ENCODE measurements at regions of chr19 and their contacts with region 1.

Region 1: DNA sequence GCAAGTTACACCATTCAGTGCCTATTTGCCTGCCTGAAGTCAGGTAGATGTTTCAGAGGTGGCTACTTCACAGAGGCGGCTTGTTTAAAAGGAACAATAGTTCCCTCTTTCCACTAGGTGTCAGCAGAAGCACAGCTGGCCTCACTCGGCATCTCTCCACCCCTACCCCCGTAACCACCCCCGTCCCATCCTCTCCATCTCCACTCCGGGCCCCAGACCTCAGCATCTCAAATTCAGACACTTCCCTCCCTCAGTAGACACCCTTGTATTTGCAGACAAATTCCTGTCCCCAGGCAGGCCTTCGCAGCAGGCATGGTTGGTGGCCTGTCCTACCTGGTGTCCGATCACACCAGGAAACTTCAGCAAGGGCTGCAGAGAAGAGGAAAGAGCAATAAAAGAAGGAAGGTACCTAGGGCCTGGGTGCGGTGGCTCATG is 9.1 kb upstream of the DPP9 start:
- DNase-seq: peak in 1 of 2 experiments; percentile 66
- H3K4me3 ChIP-seq: peak overlapping the region in 1 of 4 experiments; percentile 40; a peak in 1 of 8 replicates
- H3K27ac ChIP-seq: no peak overlapping the region
- H3K4me1 ChIP-seq: no peaks in the 10 kb centered on the region
- H3K27me3 ChIP-seq: no peaks in the 10 kb centered on the region
- CTCF ChIP-seq: peak; percentile 65 to 92 (median 75)
- EP300 ChIP-seq: no peak
- POLR2A ChIP-seq: no peak
- RAD21 ChIP-seq: peak; percentile 91 to 94

Region 2: GRCh38 chr19:4742723-4743646 is 10.3 kb after region 1 on chr19:
- CTCF ChIA-PET with region 1: interaction called, 38 read pairs
- POLR2A ChIA-PET with region 1: no interaction called
- DNase-seq: peak in 1 of 2 experiments; percentile 69
- H3K4me3 ChIP-seq: peak overlapping the region in 3 of 4 experiments; percentile 27 to 42 (median 36); a peak in 5 of 8 replicates
- H3K27ac ChIP-seq: no peak overlapping the region
- H3K4me1 ChIP-seq: peaks cover 0 to 14% (median 9%) of the 10 kb centered on the region in 4 experiments; a peak in 5 of 7 replicates
- H3K27me3 ChIP-seq: no peaks in the 10 kb centered on the region; a peak in 1 of 7 replicates
- CTCF ChIP-seq: no peak
- EP300 ChIP-seq: no peak
- POLR2A ChIP-seq: no peak
- RAD21 ChIP-seq: no peak

Region 3: DNA sequence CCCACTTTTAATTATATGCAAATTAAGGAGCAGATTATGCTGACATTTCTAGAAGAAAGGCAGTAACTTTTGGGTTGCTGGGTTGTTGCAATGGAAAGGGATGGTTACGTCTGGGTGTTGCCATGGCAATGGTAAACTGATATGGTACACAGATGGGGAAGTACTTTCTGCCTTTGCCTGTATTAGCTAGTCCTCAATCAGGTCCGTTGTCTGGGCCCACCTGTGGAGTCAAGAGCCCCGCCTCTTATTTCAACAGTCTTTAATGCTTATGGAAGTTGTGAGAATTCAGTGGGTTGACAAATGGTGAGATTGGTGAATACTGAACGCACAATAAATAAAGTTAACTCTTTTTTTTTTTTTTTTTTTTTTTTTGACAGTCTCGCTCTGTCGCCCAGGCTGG is 21.6 kb after region 1 on chr19:
- CTCF ChIA-PET with region 1: interaction called, 38 read pairs
- POLR2A ChIA-PET with region 1: no interaction called
- DNase-seq: no peak
- H3K4me3 ChIP-seq: no peak overlapping the region
- H3K27ac ChIP-seq: no peak overlapping the region
- H3K4me1 ChIP-seq: peaks cover 0 to under 1% (median under 1%) of the 10 kb centered on the region in 4 experiments; a peak in 1 of 7 replicates
- H3K27me3 ChIP-seq: peaks cover 0 to 7% (median 4%) of the 10 kb centered on the region in 4 experiments; a peak in 4 of 7 replicates
- CTCF ChIP-seq: no peak
- EP300 ChIP-seq: no peak
- POLR2A ChIP-seq: no peak
- RAD21 ChIP-seq: no peak

Region 4: DNA sequence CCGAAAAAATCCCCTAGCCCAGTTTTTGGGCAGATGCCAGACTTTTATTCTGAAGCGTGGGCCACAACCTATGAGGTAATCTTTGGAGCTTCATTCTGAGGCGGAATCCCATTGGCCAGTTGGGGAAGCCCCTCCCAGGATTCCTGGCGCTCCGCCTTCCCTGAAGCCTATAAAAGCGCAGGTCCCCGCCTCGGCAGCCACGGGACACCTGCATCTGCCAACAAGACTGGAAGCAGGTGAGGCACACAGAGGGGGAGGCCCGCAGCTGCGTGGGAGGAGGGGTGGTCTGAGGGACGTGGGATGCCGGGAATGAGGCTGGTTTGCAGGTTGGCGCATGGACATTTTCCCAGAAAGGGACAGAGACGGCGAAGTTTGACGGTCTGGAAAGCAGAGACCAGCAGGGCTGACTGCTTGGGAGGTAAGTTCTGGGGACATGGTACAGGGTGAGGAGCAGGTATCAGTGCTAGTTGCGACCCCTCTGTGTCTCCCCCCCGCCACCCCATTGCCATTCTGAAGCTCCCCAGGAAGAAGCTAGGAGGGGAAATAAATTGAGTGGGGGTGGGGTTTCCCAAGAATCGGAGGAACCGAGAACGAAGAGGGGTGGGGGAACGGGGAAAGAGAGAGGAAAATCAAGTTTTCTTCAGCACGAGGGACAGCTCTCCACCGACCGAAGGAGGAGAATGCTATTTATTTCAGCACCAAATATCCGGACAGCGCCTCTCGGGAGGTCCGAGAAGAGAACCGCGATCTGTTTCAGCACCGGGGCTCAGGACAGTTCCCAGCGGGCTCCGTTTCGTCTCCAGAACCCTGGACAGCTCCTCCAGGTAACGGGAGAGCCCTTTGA is 36.5 kb after region 1 on chr19:
- CTCF ChIA-PET with region 1: interaction called, 15 read pairs
- POLR2A ChIA-PET with region 1: interaction called, 4 read pairs
- DNase-seq: peak; percentile 57 to 99
- H3K4me3 ChIP-seq: peak overlapping the region in 2 of 4 experiments; percentile 14 to 17; a peak in 2 of 8 replicates
- H3K27ac ChIP-seq: no peak overlapping the region
- H3K4me1 ChIP-seq: peaks cover 0 to 3% (median 0%) of the 10 kb centered on the region in 4 experiments; a peak in 1 of 7 replicates
- H3K27me3 ChIP-seq: 0 out of 7 replicates have a peak, but pooled peaks cover 0 to 2% (median 0%) of the 10 kb centered on the region in 4 experiments
- CTCF ChIP-seq: no peak
- EP300 ChIP-seq: peak in 1 of 2 experiments; percentile 78; a peak in 2 of 3 replicates
- POLR2A ChIP-seq: peak; percentile 62 to 68
- RAD21 ChIP-seq: 0 out of 4 replicates have a peak, but pooled peaks of 1 of the 2 experiments have one; percentile 6

Region 5: DNA sequence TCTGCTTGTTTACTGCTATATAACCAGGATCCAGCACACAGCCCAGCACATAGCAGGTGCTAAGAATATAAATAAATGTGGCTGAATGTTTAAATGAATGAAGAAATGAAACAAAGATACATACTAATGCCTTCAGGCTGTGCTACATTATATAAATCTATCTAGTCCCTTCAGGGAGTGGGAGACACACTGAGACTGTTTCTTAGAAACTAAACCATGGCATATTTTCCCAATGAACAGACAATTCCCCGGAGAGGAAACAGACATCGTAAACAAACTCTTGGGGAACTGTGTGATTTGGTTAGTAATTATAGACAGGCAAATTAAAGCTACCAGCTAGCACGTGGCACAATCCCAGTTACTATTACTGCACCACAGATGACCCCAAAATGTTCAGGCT is 49.1 kb after region 1 on chr19:
- CTCF ChIA-PET with region 1: interaction called, 212 read pairs
- POLR2A ChIA-PET with region 1: no interaction called
- DNase-seq: no peak
- H3K4me3 ChIP-seq: no peak overlapping the region
- H3K27ac ChIP-seq: no peak overlapping the region
- H3K4me1 ChIP-seq: no peaks in the 10 kb centered on the region
- H3K27me3 ChIP-seq: no peaks in the 10 kb centered on the region; a peak in 1 of 7 replicates
- CTCF ChIP-seq: no peak
- EP300 ChIP-seq: no peak
- POLR2A ChIP-seq: no peak
- RAD21 ChIP-seq: no peak

Region 6: DNA sequence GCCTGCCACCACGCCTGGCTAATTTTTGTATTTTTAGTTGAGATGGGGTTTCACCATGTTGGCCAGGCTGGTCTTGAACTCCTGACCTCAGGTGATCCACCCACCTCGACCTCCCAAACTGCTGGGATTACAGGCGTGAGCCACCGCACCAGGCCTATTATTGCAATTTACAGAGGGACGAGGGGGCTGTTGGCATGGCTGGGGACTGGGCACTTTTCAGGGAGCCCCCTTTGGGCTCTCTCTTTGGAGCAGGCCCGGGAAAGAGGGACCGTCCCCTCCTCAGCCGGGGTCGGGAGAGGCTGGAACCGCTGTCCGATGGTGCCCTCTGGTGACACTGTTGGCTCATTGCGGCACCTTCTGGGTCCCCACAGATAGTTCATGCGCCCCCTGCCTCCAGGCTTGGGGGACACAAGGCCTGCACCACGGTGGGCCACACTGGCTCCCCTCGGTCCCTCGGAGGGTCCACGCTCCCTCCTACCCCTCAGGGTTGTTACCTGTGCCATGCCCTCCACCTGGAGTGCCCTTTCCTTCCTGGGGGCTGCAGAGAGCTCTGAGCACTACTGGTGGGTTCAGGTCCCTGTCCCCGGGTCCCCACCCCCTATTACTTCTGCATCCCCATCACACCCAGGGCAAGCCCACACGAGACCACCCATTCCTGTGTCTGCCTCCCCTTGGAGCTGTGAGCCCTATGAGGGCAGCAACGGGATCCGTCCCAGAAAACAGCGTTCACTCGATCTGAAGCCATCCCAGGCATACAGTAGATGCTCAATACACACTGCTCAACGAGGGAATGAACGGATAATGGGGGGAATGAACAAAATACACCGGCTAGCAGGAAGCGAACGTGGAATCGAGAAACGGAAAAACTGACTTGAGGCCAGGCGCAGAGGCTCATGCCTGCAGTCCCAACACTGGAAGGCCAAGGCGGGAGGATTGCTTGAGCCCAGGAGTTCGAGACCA is 71.3 kb after region 1 on chr19:
- CTCF ChIA-PET with region 1: interaction called, 100 read pairs
- POLR2A ChIA-PET with region 1: interaction called, 3 read pairs
- DNase-seq: peak; percentile 57 to 95
- H3K4me3 ChIP-seq: no peak overlapping the region
- H3K27ac ChIP-seq: no peak overlapping the region
- H3K4me1 ChIP-seq: no peaks in the 10 kb centered on the region
- H3K27me3 ChIP-seq: no peaks in the 10 kb centered on the region
- CTCF ChIP-seq: peak; percentile 99 to 100 (median 99)
- EP300 ChIP-seq: no peak
- POLR2A ChIP-seq: no peak
- RAD21 ChIP-seq: peak; percentile 93 to 95